ENCODE measurements at regions of chr11 and their contacts with region 1.

Region 1: DNA sequence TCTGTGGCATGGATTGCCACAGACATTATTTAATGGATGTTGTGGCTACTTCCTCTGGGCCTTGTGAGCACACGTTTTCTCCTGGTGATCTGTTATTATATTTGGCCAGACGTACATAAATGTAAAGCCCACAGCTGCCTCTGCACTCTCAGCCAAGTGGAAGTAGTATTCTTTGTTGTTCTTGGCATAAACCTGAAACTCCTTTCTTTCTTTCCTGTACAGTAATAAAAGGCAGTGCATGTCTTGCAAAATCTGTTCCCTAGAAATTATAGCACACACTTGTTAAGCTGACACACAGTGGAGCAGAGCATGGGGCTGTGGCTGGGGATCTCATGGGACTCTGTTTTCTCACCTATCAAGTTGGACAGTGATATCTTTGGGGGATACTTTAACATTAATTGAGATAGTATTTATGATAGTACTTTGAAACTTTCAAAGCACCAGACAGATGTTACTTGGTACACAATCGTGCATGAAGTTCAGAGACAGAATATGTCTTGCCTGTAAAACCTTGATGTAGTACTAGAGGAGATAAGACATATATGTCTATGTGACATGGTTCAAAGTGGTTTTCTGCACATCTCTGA is 20.9 kb downstream of the PANX1 start:
- DNase-seq: no peak
- H3K4me3 Mint-ChIP-seq: no peak overlapping the region
- H3K27ac Mint-ChIP-seq: no peak overlapping the region
- H3K4me1 Mint-ChIP-seq: peaks cover 88% of the 10 kb centered on the region
- H3K27me3 Mint-ChIP-seq: no peaks in the 10 kb centered on the region

Region 2: GRCh38 chr11:94134651-94135512 is 14.6 kb before region 1 on chr11:
- intact Hi-C with region 1: loop called (anchors 1 kb)
- DNase-seq: peak; percentile 9
- H3K4me3 Mint-ChIP-seq: peak overlapping the region; percentile 60
- H3K27ac Mint-ChIP-seq: peak overlapping the region; percentile 45
- H3K4me1 Mint-ChIP-seq: peaks cover 48% of the 10 kb centered on the region
- H3K27me3 Mint-ChIP-seq: no peaks in the 10 kb centered on the region

Region 3: DNA sequence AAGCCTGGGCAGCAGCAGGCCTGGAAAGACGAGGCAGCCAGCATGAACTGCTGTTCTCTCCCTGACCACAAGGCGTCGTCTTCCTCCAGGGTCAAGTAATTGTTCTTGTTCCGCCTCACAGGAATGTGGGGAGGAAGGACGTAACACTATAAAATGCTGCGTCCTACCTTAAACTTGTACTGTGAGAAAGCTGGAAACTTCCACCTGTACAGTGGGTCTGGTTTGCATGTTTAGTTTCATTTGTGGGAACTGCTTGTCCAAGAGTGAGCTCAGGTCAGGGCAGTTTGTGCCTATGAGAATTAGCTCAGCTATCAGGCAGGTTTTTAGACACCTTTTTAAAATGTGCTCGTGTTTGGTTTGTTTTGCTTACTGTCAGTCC is 34.4 kb after region 1 on chr11:
- intact Hi-C with region 1: loop called (anchors 5 kb)
- DNase-seq: no peak
- H3K4me3 Mint-ChIP-seq: no peak overlapping the region
- H3K27ac Mint-ChIP-seq: no peak overlapping the region
- H3K4me1 Mint-ChIP-seq: no peaks in the 10 kb centered on the region
- H3K27me3 Mint-ChIP-seq: no peaks in the 10 kb centered on the region